Activated B cell treated with CpG ODN at 0.5 μM for 24 hours (primary cell): ENCODE measurements at regions of chr4 and their contacts with region 1.

Region 1: GRCh38 chr4:78951862-78952472 is 12.7 kb upstream of the PAQR3 start:
- DNase-seq: no peak
- ATAC-seq: peak; percentile 68
- H3K4me3 Mint-ChIP-seq: no peak overlapping the region
- H3K27ac Mint-ChIP-seq: no peak overlapping the region
- H3K4me1 Mint-ChIP-seq: no peaks in the 10 kb centered on the region
- H3K27me3 Mint-ChIP-seq: peaks cover 7% of the 10 kb centered on the region
- CTCF ChIP-seq: no peak

Region 2: GRCh38 chr4:78938868-78939666 is 12.9 kb before region 1 on chr4 and contains the start of gene PAQR3:
- CTCF ChIA-PET with region 1: interaction called, 16 read pairs
- POLR2A ChIA-PET with region 1: no interaction called
- intact Hi-C with region 1: no loop called
- DNase-seq: peak; percentile 90
- ATAC-seq: peak; percentile 98
- H3K4me3 Mint-ChIP-seq: peak within 1 kb of the TSS; percentile 96
- H3K27ac Mint-ChIP-seq: peak within 1 kb of the TSS; percentile 84
- H3K4me1 Mint-ChIP-seq: peaks cover 20% of the 10 kb centered on the region
- H3K27me3 Mint-ChIP-seq: no peaks in the 10 kb centered on the region
- CTCF ChIP-seq: no peak
- total RNA-seq, gene PAQR3: 10.2 and 10.3 TPM in 2 replicates

Region 3: DNA sequence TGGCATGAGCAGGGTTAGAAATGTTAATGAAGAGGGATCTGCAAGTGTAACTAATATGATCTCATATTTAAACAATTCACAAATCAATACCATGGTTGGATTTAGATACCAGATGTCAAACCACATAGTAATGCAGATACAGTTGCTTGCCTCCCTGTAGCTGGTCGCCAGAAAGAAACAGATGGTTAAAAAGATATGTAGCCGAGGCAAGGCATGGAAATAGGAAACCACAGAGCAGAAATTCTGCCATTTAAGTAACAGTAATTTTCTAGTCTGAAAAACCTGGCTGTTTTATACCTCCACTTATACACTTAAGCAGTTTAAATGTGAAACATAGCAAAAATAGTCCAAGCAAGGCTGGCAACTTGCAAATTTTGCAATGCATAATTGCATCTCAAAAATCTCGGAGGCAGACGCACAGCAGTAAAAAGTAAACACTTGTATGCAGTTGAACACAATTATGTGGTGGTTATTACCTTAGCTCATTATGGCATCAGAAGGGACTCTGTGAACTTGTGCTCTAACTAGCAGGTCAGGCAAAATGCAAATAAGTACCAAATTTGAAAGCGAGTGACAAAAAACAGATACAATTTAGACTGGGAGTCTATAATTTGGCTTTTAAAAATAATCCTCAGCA is 247.1 kb after region 1 on chr4:
- CTCF ChIA-PET with region 1: no interaction called
- POLR2A ChIA-PET with region 1: no interaction called
- intact Hi-C with region 1: no loop called
- DNase-seq: no peak
- ATAC-seq: no peak
- H3K4me3 Mint-ChIP-seq: no peak overlapping the region
- H3K27ac Mint-ChIP-seq: no peak overlapping the region
- H3K4me1 Mint-ChIP-seq: no peaks in the 10 kb centered on the region
- H3K27me3 Mint-ChIP-seq: no peaks in the 10 kb centered on the region
- CTCF ChIP-seq: no peak

Region 4: DNA sequence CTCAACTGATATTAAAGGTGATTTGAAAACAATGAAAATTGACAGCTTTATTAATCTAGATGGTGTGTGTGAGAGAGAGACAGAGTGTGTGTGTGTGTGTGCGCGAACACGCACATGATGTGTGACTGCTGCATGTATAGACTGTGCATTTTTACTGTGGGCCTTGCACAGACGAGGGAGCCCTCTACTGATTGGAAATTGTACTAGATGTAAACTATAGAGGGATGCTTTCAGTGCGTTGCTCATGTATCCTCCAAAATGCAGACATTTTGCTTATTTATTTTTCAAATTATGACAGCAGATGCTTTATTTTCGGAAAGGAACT is 624.4 kb after region 1 on chr4:
- CTCF ChIA-PET with region 1: interaction called, 4 read pairs
- POLR2A ChIA-PET with region 1: no interaction called
- intact Hi-C with region 1: loop called (anchors 1 kb)
- DNase-seq: no peak
- ATAC-seq: peak; percentile 49
- H3K4me3 Mint-ChIP-seq: no peak overlapping the region
- H3K27ac Mint-ChIP-seq: no peak overlapping the region
- H3K4me1 Mint-ChIP-seq: no peaks in the 10 kb centered on the region
- H3K27me3 Mint-ChIP-seq: peaks cover 3% of the 10 kb centered on the region
- CTCF ChIP-seq: no peak

Region 5: DNA sequence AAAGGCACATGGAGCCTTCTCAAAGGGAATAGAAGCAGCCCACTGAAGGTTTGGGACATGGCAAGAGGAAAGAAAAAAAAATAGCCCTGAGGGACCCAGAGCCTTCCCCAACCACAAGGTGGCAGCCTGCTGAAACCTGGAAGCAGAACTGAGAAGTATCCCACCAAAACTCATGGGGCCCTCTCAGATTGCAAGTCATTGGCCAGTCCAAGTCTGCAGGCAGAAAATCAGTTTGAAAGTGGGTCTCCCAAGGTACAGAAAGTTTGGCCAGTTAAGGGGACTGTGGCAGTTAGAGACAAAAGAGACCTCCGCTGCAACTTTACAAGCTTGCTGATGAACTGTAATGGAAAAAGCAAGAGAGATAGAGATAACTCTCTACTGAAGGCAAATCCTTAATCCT is 965.3 kb after region 1 on chr4:
- CTCF ChIA-PET with region 1: no interaction called
- POLR2A ChIA-PET with region 1: no interaction called
- intact Hi-C with region 1: loop called (anchors 1 kb)
- DNase-seq: peak; percentile 25
- ATAC-seq: peak; percentile 68
- H3K4me3 Mint-ChIP-seq: no peak overlapping the region
- H3K27ac Mint-ChIP-seq: no peak overlapping the region
- H3K4me1 Mint-ChIP-seq: peaks cover 4% of the 10 kb centered on the region
- H3K27me3 Mint-ChIP-seq: no peaks in the 10 kb centered on the region
- CTCF ChIP-seq: no peak

Region 6: DNA sequence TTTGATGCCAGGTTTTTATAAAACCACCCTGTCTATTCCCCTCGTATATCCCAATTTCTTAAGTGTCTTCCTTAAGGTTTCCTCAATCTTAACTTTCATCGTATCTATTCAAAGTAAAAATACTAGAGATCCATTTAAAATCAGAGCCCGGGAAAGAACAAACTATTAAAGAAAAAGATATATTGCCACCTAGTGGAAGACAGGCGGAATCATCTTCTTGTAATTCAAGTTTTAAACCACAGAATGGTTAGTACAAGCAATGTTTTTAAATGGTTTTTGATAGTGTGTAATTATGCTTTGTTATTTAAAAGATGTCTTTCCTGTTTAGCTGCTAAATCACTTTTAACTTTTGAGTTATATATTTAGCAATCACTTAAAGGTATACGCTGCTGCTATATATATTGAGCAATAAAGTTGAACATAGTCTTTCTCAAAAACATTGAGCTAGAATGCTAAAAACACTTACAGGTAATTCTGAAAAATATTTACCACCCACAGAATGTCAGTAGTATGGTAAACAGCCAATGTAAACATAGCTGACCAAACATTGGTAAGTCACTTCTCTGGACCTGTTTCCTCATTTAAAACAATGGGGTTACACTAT is 1263.6 kb after region 1 on chr4:
- CTCF ChIA-PET with region 1: interaction called, 8 read pairs
- POLR2A ChIA-PET with region 1: no interaction called
- intact Hi-C with region 1: loop called (anchors 1 kb)
- DNase-seq: no peak
- ATAC-seq: no peak
- H3K4me3 Mint-ChIP-seq: no peak overlapping the region
- H3K27ac Mint-ChIP-seq: no peak overlapping the region
- H3K4me1 Mint-ChIP-seq: peaks cover 2% of the 10 kb centered on the region
- H3K27me3 Mint-ChIP-seq: peaks cover 28% of the 10 kb centered on the region
- CTCF ChIP-seq: peak; percentile 86